ENCODE measurements at regions of chr10 and their contacts with region 1.

Region 1: GRCh38 chr10:73743905-73744663 is at the start of gene SEC24C:
- DNase-seq: peak; percentile 93
- ATAC-seq: peak; percentile 90
- H3K4me3 Mint-ChIP-seq: peak within 1 kb of the TSS; percentile 98
- H3K27ac Mint-ChIP-seq: peak within 1 kb of the TSS; percentile 98
- H3K4me1 Mint-ChIP-seq: peaks cover 22% of the 10 kb centered on the region
- H3K27me3 Mint-ChIP-seq: no peaks in the 10 kb centered on the region
- total RNA-seq, gene SEC24C: 96.3 to 96.7 TPM

Region 2: DNA sequence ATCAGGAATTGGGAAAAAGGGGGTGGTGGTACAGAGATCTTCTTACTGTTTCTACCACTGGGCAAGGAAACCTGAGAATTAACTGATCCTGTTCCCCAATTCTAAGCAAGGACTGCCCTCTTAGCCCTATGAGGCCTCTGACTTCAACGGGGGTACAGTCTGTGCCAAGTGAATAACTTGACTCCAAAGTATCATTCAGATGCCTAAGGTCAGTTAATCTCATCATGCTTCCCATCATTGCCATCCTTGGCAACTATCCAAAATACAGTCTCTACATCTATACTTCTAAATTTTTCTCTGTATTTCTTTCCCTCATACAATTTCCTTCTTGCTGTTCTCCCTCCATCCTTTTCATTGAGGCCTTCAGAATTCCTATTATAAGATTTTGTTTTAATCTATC is 258.8 kb before region 1 on chr10:
- POLR2A ChIA-PET with region 1: no interaction called
- DNase-seq: no peak
- ATAC-seq: no peak
- H3K4me3 Mint-ChIP-seq: no peak overlapping the region
- H3K27ac Mint-ChIP-seq: no peak overlapping the region
- H3K4me1 Mint-ChIP-seq: peaks cover 5% of the 10 kb centered on the region
- H3K27me3 Mint-ChIP-seq: no peaks in the 10 kb centered on the region

Region 3: GRCh38 chr10:73730153-73730906 is 13.8 kb before region 1 on chr10:
- POLR2A ChIA-PET with region 1: interaction called, 47 read pairs
- DNase-seq: peak; percentile 94
- ATAC-seq: peak; percentile 92
- H3K4me3 Mint-ChIP-seq: peak overlapping the region; percentile 99
- H3K27ac Mint-ChIP-seq: peak overlapping the region; percentile 97
- H3K4me1 Mint-ChIP-seq: peaks cover 15% of the 10 kb centered on the region
- H3K27me3 Mint-ChIP-seq: no peaks in the 10 kb centered on the region

Measured in activated naive CD8-positive, alpha-beta T cell treated with anti-CD3 and anti-CD28 coated beads, Interleukin-2, amount 10 ng/mL, durations not matched to agents 7 days and 5 days (primary cell).